Left ventricle myocardium superior (tissue), 1 donor: ENCODE measurements at regions of chr4 and their contacts with region 1.

Region 1: GRCh38 chr4:2220016-2220630 is 21.8 kb downstream of the HAUS3 start:
- DNase-seq: peak; percentile 78
- ATAC-seq: peak; percentile 92

Region 2: GRCh38 chr4:1183985-1184773 is 1035.9 kb before region 1 on chr4:
- intact Hi-C with region 1: no loop called
- DNase-seq: peak; percentile 19
- ATAC-seq: peak; percentile 37

Region 3: DNA sequence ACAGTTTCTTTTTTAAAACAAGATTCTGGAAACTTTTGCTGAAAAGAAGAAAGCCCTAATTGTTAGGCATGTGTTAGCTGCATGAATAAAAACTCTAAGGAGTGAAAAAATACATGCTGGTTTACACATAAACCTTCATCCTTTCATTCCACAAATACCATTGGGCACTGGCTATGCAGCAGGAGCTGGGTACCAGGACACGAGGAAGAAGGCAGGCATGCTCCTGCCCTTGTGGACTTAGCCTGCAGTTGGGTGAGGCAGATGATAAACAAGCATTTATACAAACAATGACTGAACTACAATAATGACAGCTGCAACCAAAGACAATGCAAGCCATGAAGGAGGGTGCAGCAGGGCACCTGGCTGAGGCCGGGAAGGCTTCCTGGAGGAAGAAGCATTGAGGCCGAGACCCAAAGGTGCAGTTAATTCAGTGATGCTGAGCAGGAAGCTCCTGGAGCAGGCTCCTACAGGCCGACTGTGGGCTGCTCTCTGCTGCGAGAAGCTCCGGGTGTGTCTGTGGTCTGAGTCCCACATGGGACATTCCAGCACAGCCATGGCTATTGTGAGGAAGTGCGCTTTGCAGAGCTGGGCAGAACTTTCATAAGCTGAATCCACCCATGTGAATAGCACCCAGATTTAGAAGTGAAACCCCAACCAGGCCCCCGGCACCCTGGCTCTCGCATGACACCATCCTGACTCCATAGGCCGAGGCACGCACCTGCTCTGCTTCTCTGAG is 85.8 kb after region 1 on chr4:
- intact Hi-C with region 1: no loop called
- DNase-seq: no peak
- ATAC-seq: no peak

Region 4: GRCh38 chr4:2468445-2469192 is 248.5 kb after region 1 on chr4 and contains the start of gene RNF4:
- intact Hi-C with region 1: loop called (anchors 10 kb)
- DNase-seq: peak; percentile 97
- ATAC-seq: peak; percentile 96
- total RNA-seq, gene RNF4: 26.1 TPM